Activated CD4-positive, alpha-beta T cell treated with anti-CD3 and anti-CD28 coated beads for 36 hours (primary cell): ENCODE measurements at regions of chr18 and their contacts with region 1.

Region 1: DNA sequence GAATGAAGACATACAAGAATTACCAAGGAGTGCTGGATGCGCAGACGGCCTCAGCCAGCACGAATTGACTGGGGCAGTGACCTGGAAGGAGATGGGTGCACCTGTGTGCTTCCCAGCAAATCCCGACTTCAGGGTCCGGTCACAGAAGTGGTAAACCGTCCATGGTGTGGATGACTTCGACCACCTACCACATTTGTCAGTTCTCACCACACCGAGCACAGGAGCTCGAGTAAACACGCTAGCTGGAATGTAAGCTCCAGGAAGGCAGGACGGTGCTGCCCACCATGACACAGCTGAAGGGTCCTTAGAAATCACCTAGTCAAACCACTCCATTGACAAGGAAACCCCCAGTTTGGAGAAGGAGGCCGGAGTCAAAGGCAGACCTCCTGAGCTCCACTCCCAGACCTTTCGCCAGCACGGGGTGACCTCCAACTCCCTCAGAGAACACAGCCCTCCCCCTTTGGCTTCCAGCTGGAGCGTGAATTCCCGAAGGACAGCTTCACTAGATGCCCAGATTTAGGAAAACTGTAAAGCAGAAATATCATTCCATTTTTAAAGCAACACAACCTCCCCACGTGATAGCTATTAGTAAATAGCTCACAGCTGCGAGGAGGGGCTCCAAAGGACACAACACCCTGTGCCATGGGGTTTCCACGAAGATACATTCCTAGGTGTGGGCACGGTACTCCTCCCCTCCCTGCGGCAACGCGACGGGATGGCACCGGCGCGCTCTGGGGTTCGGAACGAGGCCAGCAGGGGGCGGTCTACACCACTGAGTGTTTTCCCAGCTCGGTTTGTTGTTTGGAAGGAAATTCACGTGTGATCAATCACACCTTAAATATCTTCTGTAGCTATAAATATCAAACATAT is 34.1 kb upstream of the GNAL start:
- DNase-seq: peak; percentile 81
- ATAC-seq: peak; percentile 58
- H3K4me3 Mint-ChIP-seq: no peak overlapping the region
- H3K27ac Mint-ChIP-seq: no peak overlapping the region
- H3K4me1 Mint-ChIP-seq: peaks cover 3% of the 10 kb centered on the region
- H3K27me3 Mint-ChIP-seq: peaks cover 37% of the 10 kb centered on the region

Region 2: DNA sequence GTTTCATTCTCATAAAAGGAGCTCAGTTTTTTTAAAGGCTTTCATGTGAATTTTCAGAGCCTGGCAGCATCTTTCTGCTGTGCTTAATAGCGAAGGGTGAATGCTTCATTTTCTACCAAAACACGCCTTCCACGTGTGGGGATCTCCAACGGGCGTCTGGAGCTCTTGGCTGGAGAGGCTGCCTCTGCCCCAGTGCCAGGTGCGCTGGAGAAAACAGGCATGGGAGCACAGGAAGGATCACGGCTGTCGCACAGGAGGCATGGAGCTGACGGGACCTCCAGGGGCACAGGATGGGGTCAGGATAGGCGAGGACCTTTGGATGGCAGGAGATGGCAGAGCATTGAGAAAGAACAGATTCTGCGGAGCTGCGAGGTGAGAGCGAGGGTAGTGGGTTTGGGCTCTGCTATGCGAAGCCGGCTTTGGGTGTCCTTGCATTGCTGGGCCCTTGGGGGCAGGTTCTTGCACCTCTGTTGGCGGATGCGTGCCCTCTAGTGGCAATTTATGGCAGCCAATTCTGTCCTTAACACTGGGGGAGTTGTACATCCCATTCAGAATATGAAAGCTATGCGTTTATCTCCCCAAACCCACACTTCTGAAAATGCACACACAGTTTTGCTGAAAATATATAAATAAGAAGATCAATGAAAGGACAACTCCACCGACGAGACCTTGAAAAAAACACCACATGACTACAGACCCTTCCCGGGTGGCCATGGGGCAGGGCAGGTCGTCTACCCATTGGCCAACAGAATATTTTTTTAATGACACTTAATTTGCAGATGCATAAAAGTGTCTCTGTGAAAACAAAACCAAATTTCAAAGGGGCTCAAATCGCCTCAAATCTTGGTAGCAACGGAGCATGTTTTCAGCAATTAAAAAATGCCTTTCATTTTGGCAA is 135.9 kb before region 1 on chr18:
- CTCF ChIA-PET with region 1: no interaction called
- POLR2A ChIA-PET with region 1: no interaction called
- intact Hi-C with region 1: no loop called
- DNase-seq: peak; percentile 74
- ATAC-seq: peak; percentile 57
- H3K4me3 Mint-ChIP-seq: no peak overlapping the region
- H3K27ac Mint-ChIP-seq: no peak overlapping the region
- H3K4me1 Mint-ChIP-seq: no peaks in the 10 kb centered on the region
- H3K27me3 Mint-ChIP-seq: no peaks in the 10 kb centered on the region

Region 3: GRCh38 chr18:11733031-11733430 is 78.1 kb after region 1 on chr18:
- CTCF ChIA-PET with region 1: interaction called, 17 read pairs
- POLR2A ChIA-PET with region 1: no interaction called
- intact Hi-C with region 1: loop called in 1 of 2 experiments (anchors 5 kb)
- DNase-seq: peak; percentile 84
- ATAC-seq: peak; percentile 83
- H3K4me3 Mint-ChIP-seq: no peak overlapping the region
- H3K27ac Mint-ChIP-seq: no peak overlapping the region
- H3K4me1 Mint-ChIP-seq: no peaks in the 10 kb centered on the region
- H3K27me3 Mint-ChIP-seq: peaks cover 35% of the 10 kb centered on the region

Region 4: DNA sequence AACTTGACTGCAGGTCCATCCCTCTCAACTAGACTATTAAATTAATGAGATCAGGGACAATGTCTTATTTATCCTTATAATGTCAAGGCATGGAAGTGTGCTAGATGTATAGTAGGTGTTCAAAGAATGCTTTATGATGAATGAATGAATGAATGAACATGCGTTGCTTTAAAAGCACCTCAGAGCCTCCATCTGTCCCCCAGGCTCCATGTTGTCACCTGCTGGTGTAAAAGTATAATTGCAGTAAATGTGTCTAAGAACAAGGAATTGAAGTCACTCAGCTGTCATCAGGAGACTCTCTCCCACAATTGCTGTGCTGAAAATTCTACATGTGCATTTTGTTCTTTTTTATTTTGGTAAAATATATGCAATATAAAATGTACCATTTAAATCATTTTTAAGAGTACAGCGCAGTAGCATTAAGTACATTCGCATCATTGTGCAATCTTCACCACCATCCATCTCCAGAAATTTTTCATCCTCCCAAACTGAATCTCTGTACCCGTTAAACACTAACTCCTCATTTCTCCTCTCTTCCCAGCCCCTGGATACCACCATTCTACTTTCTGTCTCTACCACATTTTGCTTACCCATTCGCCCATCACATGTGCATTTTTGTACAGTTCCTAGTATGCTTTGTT is 86.7 kb after region 1 on chr18:
- CTCF ChIA-PET with region 1: interaction called, 8 read pairs
- POLR2A ChIA-PET with region 1: no interaction called
- intact Hi-C with region 1: loop called in 1 of 2 experiments (anchors 1 kb)
- DNase-seq: no peak
- ATAC-seq: no peak
- H3K4me3 Mint-ChIP-seq: no peak overlapping the region
- H3K27ac Mint-ChIP-seq: no peak overlapping the region
- H3K4me1 Mint-ChIP-seq: no peaks in the 10 kb centered on the region
- H3K27me3 Mint-ChIP-seq: peaks cover 29% of the 10 kb centered on the region

Region 5: GRCh38 chr18:11872479-11873136 is 217.6 kb after region 1 on chr18:
- CTCF ChIA-PET with region 1: no interaction called
- POLR2A ChIA-PET with region 1: no interaction called
- intact Hi-C with region 1: loop called in 1 of 2 experiments (anchors 10 kb)
- DNase-seq: peak; percentile 22
- ATAC-seq: peak; percentile 49
- H3K4me3 Mint-ChIP-seq: no peak overlapping the region
- H3K27ac Mint-ChIP-seq: no peak overlapping the region
- H3K4me1 Mint-ChIP-seq: peaks cover 2% of the 10 kb centered on the region
- H3K27me3 Mint-ChIP-seq: peaks cover 6% of the 10 kb centered on the region

Region 6: DNA sequence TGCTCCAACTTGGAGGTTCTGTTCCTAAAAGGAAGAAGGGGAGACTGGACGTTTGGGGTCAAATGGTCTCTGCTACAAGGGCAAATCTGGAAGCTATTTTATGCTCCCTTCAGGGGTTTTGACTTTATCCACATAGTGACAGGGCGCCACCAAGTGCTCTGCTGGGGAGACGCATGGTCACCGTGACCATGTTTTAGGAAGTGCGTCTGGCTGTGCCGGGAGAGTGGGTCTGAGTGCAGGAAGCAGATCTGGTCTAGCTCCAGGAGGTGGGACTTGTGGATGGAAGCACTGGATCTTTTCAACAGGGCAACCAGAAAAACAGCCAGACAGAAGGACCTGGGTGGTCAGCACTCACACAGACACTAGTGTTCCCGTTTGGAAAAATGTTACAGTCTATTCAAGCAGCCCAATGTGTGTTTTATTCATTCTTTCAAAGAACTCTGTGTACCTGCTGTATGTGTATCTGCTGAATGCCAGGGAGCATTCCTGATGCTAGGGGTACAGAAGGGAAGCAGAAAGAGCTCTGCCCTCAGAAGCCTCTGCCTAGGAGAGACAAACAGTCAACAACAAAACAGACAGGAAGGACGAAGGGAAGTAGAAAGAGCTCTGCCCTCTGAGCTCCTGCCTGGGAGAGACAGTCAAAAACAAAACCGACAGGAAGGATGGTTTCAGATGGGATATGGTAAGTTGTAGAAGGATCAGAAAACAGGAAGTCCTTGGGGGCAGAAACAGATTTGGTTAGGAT is 340.6 kb after region 1 on chr18:
- CTCF ChIA-PET with region 1: interaction called, 19 read pairs
- POLR2A ChIA-PET with region 1: no interaction called
- intact Hi-C with region 1: loop called (anchors 1 to 10 kb)
- DNase-seq: peak; percentile 75
- ATAC-seq: peak; percentile 97
- H3K4me3 Mint-ChIP-seq: no peak overlapping the region
- H3K27ac Mint-ChIP-seq: no peak overlapping the region
- H3K4me1 Mint-ChIP-seq: peaks cover 7% of the 10 kb centered on the region
- H3K27me3 Mint-ChIP-seq: no peaks in the 10 kb centered on the region

Region 7: DNA sequence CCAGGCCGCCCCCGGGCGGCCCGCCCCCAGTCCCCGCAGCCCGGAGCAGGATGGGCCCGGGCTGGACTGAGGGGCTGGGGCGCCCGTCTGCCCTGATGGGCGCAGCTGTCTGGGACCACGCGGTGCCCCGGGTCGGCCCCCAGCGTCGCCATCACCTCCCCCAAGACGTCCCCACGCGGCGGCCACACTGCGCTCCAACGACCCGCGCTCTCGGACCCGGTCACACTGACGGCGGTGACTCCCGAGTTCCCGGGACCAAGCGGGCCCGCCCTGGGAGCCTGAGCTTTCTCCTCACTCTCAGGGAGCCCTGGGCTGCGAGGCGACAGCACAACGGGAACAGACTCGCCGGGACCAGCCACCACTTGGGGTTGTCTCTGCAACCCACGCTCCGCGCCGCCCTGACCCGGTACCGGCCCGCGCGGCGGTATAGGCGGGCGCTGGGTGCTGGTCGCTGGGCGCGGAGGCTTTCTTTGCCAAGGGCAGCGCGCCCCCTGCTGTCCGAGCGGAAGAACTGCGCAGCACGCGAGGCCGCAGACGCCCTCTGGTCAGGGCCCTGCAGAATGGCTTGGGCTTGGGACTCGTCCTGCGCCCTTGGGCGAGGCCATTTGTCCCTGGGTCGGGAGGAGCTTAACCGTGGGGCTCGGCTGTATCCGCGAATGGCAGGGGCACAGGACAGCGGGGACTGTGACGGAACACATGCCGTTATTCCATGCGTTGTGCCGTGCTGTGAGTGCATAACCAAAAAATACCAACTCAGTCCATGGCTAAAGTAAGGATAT is 383.9 kb after region 1 on chr18:
- CTCF ChIA-PET with region 1: interaction called, 13 read pairs
- POLR2A ChIA-PET with region 1: no interaction called
- intact Hi-C with region 1: loop called (anchors 1 to 2 kb)
- DNase-seq: peak; percentile 85
- ATAC-seq: peak; percentile 78
- H3K4me3 Mint-ChIP-seq: peak overlapping the region; percentile 43
- H3K27ac Mint-ChIP-seq: no peak overlapping the region
- H3K4me1 Mint-ChIP-seq: peaks cover 12% of the 10 kb centered on the region
- H3K27me3 Mint-ChIP-seq: peaks cover 14% of the 10 kb centered on the region

Region 8: DNA sequence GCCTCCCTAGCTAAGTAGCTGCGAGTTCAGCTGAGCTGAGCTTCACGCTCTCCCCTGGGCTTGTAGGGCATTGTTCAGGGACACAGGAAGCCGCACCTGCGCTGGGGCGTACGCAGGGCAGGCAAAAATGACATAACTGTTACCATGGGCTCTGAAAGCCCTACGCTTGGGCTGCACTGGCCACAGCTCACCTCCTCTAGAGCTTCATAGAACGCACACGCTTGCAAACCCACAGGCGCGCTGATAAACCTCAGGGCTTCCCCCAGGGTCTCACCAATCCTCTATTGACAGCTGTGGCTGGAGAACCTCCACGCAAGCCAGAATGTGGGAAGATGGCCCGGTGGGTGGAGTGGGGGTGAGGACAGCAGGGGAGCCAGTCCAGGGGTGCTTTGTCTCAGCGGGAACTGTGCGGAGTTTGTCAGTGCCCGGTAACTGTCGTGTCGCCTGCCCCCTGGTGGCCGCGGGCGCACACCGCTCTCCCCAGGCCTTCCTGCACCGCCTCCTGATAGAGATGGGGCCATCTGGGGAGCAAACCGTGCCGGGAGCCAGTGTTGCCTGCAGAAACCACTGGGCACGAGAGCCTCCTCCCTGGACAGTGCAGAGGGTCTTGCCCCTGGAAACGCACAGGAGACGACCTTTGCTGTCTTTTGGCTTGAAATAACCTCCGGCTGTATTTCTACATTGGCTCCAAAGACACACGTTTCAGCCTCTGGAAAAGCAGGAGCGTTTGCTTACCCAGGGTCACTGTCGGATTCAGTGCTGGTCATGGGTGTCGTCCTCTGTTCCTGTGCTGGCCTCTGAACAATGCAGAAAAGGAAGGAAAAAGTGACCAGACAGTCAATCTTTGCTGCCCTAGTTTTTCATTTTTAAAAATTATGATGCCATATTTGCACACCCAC is 582.2 kb after region 1 on chr18:
- CTCF ChIA-PET with region 1: interaction called, 4 read pairs
- POLR2A ChIA-PET with region 1: no interaction called
- intact Hi-C with region 1: loop called in 1 of 2 experiments (anchors 5 kb)
- DNase-seq: peak; percentile 86
- ATAC-seq: peak; percentile 98
- H3K4me3 Mint-ChIP-seq: no peak overlapping the region
- H3K27ac Mint-ChIP-seq: no peak overlapping the region
- H3K4me1 Mint-ChIP-seq: no peaks in the 10 kb centered on the region
- H3K27me3 Mint-ChIP-seq: peaks cover 36% of the 10 kb centered on the region